Keratinocyte (primary cell): ENCODE measurements at regions of chr1 and their contacts with region 1.

Region 1: DNA sequence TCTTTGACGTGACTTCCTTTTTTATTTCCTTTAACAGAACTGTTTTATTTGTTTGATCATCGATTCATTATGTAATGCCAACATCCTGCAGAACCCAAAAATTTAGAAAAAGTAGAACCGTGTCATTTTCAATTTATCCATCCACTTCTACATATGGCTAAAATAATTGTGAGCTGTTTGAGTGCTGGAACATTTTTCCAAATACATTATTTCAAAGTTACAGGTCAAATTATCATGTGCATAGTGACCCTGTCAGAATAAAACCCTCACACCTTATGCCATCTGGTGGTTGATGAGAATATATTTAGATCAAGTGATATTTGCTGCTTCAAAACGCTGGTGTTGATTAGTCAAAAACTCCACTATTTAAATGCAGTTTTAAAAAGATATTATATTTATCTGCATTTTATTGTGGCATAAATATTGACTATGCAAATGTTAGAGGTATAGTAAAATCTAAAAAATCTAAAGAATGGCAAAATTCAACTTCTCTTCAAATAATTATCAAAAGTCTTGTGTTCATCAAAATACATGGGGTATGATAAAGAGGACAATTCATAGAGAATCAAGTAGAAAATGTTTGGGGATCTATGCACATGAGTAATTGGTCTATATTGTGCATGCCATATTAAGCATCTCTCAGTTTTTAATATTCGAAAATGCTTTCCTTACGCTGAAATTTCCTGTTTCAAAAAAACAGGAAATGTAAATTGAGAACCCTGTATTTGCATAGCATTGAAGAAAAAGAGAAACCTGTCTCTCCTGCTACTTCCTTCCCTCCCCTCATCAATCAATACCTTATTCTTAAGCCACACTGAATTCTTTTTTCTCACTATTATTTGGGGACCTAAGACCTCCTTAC is 39.7 kb downstream of the UBE2U start:
- DNase-seq: no peak
- H3K4me3 ChIP-seq: no peak overlapping the region
- H3K27ac ChIP-seq: no peak overlapping the region
- H3K4me1 ChIP-seq: no peaks in the 10 kb centered on the region
- H3K27me3 ChIP-seq: no peaks in the 10 kb centered on the region
- CTCF ChIP-seq: peak in 1 of 3 experiments; percentile 46

Region 2: GRCh38 chr1:63593303-63593885 is 649.7 kb before region 1 on chr1 and contains the start of gene PGM1:
- dilution Hi-C with region 1: loop called (anchors 25 kb)
- DNase-seq: no peak
- H3K4me3 ChIP-seq: peak within 1 kb of the TSS; percentile 85 to 93 (median 87)
- H3K27ac ChIP-seq: peak within 1 kb of the TSS; percentile 84
- H3K4me1 ChIP-seq: peaks cover 6% of the 10 kb centered on the region
- H3K27me3 ChIP-seq: no peaks in the 10 kb centered on the region
- CTCF ChIP-seq: no peak
- polyA plus RNA-seq, gene PGM1: 34.0 to 38.9 TPM (median 36.3 TPM) in 3 replicates

Region 3: GRCh38 chr1:64043976-64044375 is 199.2 kb before region 1 on chr1:
- dilution Hi-C with region 1: no loop called
- DNase-seq: no peak
- H3K4me3 ChIP-seq: no peak overlapping the region
- H3K27ac ChIP-seq: no peak overlapping the region
- H3K4me1 ChIP-seq: peaks cover 55% of the 10 kb centered on the region
- H3K27me3 ChIP-seq: no peaks in the 10 kb centered on the region
- CTCF ChIP-seq: no peak